Breast epithelium (tissue), 4 donors: ENCODE measurements at regions of chr20 and their contacts with region 1.

Region 1: GRCh38 chr20:4726710-4727397 is 5.1 kb downstream of the PRND start:
- DNase-seq: no peak
- H3K4me3 ChIP-seq: peak overlapping the region in 2 of 3 donors; percentile 5 to 8
- H3K27ac ChIP-seq: no peak overlapping the region
- H3K4me1 ChIP-seq: no peaks in the 10 kb centered on the region
- H3K27me3 ChIP-seq: no peaks in the 10 kb centered on the region
- CTCF ChIP-seq: no peak
- POLR2A ChIP-seq: no peak

Region 2: DNA sequence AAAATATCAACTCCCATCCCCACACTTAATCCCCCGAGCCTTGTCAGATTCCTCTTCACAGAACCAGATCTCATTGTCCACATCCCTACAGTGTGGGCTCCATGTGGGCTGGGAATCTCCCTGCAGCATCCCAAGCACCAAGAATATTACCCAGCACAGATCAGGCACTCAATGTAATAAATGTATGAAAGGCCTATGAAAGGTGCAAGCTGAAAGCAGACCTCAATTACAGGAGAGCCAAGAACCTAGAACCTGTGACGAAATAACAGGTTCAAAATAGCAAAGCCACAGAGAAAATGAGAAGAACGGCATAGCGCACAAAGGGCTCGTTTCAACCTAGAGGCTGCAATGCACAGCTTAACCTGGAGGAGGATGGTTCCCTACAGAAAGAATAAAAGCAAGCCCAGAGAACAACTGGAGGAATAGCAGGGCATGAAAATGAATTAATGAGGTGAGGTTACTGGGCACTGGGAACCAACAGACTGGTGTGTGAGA is 271.4 kb after region 1 on chr20:
- intact Hi-C with region 1: loop called (anchors 5 kb)
- DNase-seq: no peak
- H3K4me3 ChIP-seq: no peak overlapping the region
- H3K27ac ChIP-seq: no peak overlapping the region
- H3K4me1 ChIP-seq: peaks cover 3 to 4% of the 10 kb centered on the region in 2 donors
- H3K27me3 ChIP-seq: no peaks in the 10 kb centered on the region
- CTCF ChIP-seq: no peak
- POLR2A ChIP-seq: no peak

Region 3: GRCh38 chr20:5109276-5109675 is 382.4 kb after region 1 on chr20:
- intact Hi-C with region 1: no loop called
- DNase-seq: no peak
- H3K4me3 ChIP-seq: no peak overlapping the region
- H3K27ac ChIP-seq: no peak overlapping the region
- H3K4me1 ChIP-seq: no peaks in the 10 kb centered on the region
- H3K27me3 ChIP-seq: no peaks in the 10 kb centered on the region
- CTCF ChIP-seq: no peak
- POLR2A ChIP-seq: no peak